CD4-positive, alpha-beta T cell (primary cell): ENCODE measurements at regions of chr4 and their contacts with region 1.

Region 1: DNA sequence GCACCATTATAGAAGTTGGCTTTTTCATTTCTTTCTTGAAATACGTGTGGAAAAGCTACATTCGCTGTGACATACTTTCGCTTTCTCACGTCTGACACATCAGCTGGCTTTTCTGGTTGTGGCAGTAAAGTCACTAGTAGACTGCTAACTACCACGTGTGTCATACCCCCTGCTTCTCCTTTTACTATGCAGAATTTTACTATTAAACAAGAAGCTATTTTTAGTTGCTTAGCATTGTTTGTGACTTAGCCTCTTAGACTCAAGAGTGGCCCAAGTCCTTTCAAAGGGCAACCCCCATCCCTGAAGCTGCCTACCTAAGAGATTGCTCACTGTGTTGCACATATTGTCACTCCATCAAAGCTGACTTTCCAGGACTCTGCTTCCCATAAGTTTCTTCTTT is 2.1 kb upstream of the IL2 start:
- DNase-seq: peak in 10 of 14 experiments; percentile 3 to 78 (median 14)
- ATAC-seq: peak; percentile 73
- H3K4me3 ChIP-seq: peak overlapping the region; percentile 41
- H3K4me3 Mint-ChIP-seq: peak overlapping the region; percentile 90
- H3K27ac ChIP-seq: peak overlapping the region in 1 of 2 donors; percentile 6
- H3K27ac Mint-ChIP-seq: peak overlapping the region; percentile 69
- H3K4me1 ChIP-seq: peaks cover 2% of the 10 kb centered on the region
- H3K4me1 Mint-ChIP-seq: peaks cover 52% of the 10 kb centered on the region
- H3K27me3 ChIP-seq: no peaks in the 10 kb centered on the region
- H3K27me3 Mint-ChIP-seq: no peaks in the 10 kb centered on the region
- CTCF ChIP-seq: no peak

Region 2: GRCh38 chr4:121726642-121727268 is 731.9 kb before region 1 on chr4:
- CTCF ChIA-PET with region 1: no interaction called
- POLR2A ChIA-PET with region 1: no interaction called
- intact Hi-C with region 1: no loop called
- DNase-seq: peak in 3 of 14 experiments; percentile 66 to 68 (median 67)
- ATAC-seq: peak; percentile 85
- H3K4me3 ChIP-seq: no peak overlapping the region
- H3K4me3 Mint-ChIP-seq: no peak overlapping the region
- H3K27ac ChIP-seq: no peak overlapping the region
- H3K27ac Mint-ChIP-seq: no peak overlapping the region
- H3K4me1 ChIP-seq: no peaks in the 10 kb centered on the region
- H3K4me1 Mint-ChIP-seq: no peaks in the 10 kb centered on the region
- H3K27me3 ChIP-seq: no peaks in the 10 kb centered on the region
- H3K27me3 Mint-ChIP-seq: no peaks in the 10 kb centered on the region
- CTCF ChIP-seq: peak; percentile 69

Region 3: DNA sequence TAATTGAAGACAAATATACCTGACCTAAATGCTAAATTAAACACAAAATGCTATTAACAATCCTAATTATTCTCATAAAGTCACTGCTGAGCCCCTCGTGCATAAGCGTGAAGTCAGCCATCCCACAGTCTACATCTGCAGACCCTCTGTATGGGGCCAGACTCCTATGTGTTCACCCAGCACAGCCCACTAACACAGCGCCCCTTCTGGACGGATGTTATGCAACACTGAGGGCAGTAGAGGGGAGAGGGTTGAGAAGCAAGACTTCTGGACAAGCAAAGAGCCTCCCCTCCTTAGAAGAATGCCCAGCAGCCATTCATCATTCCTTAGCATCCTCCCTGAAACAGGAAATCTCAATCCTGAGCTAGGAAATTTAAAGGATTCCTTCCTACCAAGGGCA is 514.7 kb before region 1 on chr4:
- CTCF ChIA-PET with region 1: no interaction called
- POLR2A ChIA-PET with region 1: no interaction called
- intact Hi-C with region 1: loop called in 1 of 2 experiments (anchors 10 kb)
- DNase-seq: peak in 2 of 14 experiments; percentile 12 to 25
- ATAC-seq: peak; percentile 44
- H3K4me3 ChIP-seq: no peak overlapping the region
- H3K4me3 Mint-ChIP-seq: no peak overlapping the region
- H3K27ac ChIP-seq: no peak overlapping the region
- H3K27ac Mint-ChIP-seq: no peak overlapping the region
- H3K4me1 ChIP-seq: peaks cover under 1% of the 10 kb centered on the region
- H3K4me1 Mint-ChIP-seq: no peaks in the 10 kb centered on the region
- H3K27me3 ChIP-seq: peaks cover 0 to 29% of the 10 kb centered on the region in 2 experiments
- H3K27me3 Mint-ChIP-seq: peaks cover 75% of the 10 kb centered on the region
- CTCF ChIP-seq: no peak

Region 4: GRCh38 chr4:123524958-123525628 is 1066.5 kb after region 1 on chr4:
- CTCF ChIA-PET with region 1: no interaction called
- POLR2A ChIA-PET with region 1: no interaction called
- intact Hi-C with region 1: no loop called
- DNase-seq: no peak
- ATAC-seq: no peak
- H3K4me3 ChIP-seq: no peak overlapping the region
- H3K4me3 Mint-ChIP-seq: no peak overlapping the region
- H3K27ac ChIP-seq: no peak overlapping the region
- H3K27ac Mint-ChIP-seq: no peak overlapping the region
- H3K4me1 ChIP-seq: no peaks in the 10 kb centered on the region
- H3K4me1 Mint-ChIP-seq: no peaks in the 10 kb centered on the region
- H3K27me3 ChIP-seq: no peaks in the 10 kb centered on the region
- H3K27me3 Mint-ChIP-seq: no peaks in the 10 kb centered on the region
- CTCF ChIP-seq: no peak